ENCODE measurements at regions of chr1 and their contacts with region 1.

Region 1: GRCh38 chr1:85413169-85413568 is 51.8 kb downstream of the DDAH1 start:
- DNase-seq: no peak
- H3K4me3 ChIP-seq: no peak overlapping the region
- H3K27ac ChIP-seq: no peak overlapping the region
- H3K27me3 ChIP-seq: no peaks in the 10 kb centered on the region
- CTCF ChIP-seq: no peak

Region 2: GRCh38 chr1:85818371-85818770 is 405.2 kb after region 1 on chr1:
- intact Hi-C with region 1: loop called in 1 of 2 experiments (anchors 5 kb)
- DNase-seq: no peak
- H3K4me3 ChIP-seq: no peak overlapping the region
- H3K27ac ChIP-seq: no peak overlapping the region
- H3K27me3 ChIP-seq: no peaks in the 10 kb centered on the region
- CTCF ChIP-seq: no peak

Measured in dorsolateral prefrontal cortex (tissue), 120 donors.